Heart right ventricle (tissue), 16 donors: ENCODE measurements at regions of chr15 and their contacts with region 1.

Region 1: GRCh38 chr15:47196057-47196456 is 521.2 kb upstream of the SEMA6D start:
- DNase-seq: peak; percentile 77 to 82
- ATAC-seq: peak; percentile 86 to 99 (median 95)
- H3K4me3 ChIP-seq: no peak overlapping the region
- H3K27ac ChIP-seq: no peak overlapping the region
- H3K4me1 ChIP-seq: peaks cover 0 to 4% (median 0%) of the 10 kb centered on the region in 9 donors
- H3K27me3 ChIP-seq: no peaks in the 10 kb centered on the region
- CTCF ChIP-seq: peak; percentile 66 to 91 (median 83)

Region 2: DNA sequence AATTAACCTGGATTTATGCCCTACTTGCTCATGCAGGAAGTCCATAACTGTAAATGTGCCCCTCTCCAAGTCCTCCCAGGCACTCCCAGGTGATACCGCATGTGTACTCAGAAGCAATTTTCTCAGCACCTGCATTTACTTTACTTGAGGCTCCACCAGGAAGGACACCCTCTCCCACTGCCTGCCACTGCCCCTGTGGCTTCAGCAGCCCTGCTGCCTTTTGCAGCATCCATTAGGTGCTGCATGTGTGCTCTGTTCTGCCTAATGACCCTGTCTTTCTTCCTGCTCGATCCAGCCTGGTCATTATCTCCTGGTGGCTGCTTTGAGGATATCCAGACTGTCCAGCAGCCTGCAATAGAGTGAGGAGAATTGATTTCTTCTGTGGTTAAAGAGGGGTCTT is 413.6 kb after region 1 on chr15:
- intact Hi-C with region 1: loop called in 3 of 10 experiments (anchors 5 to 10 kb)
- DNase-seq: no peak
- ATAC-seq: no peak
- H3K4me3 ChIP-seq: no peak overlapping the region
- H3K27ac ChIP-seq: no peak overlapping the region
- H3K4me1 ChIP-seq: peaks cover 0 to 15% (median 10%) of the 10 kb centered on the region in 9 donors
- H3K27me3 ChIP-seq: peaks cover 0 to 27% (median 16%) of the 10 kb centered on the region in 7 donors
- CTCF ChIP-seq: no peak

Region 3: DNA sequence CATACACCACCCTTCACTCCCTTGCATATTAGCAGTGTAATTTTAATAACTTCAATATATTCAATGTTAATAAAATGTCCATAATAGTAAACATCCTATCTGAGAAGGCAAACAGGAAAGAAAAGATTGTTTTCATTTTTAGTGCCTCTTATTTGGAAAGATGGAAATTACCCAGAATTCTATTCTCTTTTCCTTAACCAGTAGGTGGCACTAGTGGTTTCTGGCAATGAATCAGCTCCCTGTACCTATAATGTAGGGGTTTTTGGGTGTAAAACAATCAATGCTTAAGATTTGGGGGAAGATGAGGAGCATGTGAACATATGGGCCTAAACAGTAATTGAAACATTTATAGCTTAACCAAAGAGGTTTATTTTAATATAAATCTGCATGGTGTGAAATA is 515.6 kb after region 1 on chr15:
- intact Hi-C with region 1: loop called in 2 of 10 experiments (anchors 5 to 10 kb)
- DNase-seq: no peak
- ATAC-seq: no peak
- H3K4me3 ChIP-seq: no peak overlapping the region
- H3K27ac ChIP-seq: no peak overlapping the region
- H3K4me1 ChIP-seq: peaks cover 0 to 14% (median 9%) of the 10 kb centered on the region in 9 donors
- H3K27me3 ChIP-seq: peaks cover 0 to 25% (median 0%) of the 10 kb centered on the region in 7 donors
- CTCF ChIP-seq: peak; percentile 22 to 70 (median 54)

Region 4: GRCh38 chr15:47987908-47988532 is 792.0 kb after region 1 on chr15:
- intact Hi-C with region 1: loop called (anchors 1 to 5 kb)
- DNase-seq: peak in 1 of 2 donors; percentile 47
- ATAC-seq: peak; percentile 83 to 96 (median 89)
- H3K4me3 ChIP-seq: no peak overlapping the region
- H3K27ac ChIP-seq: no peak overlapping the region
- H3K4me1 ChIP-seq: no peaks in the 10 kb centered on the region
- H3K27me3 ChIP-seq: no peaks in the 10 kb centered on the region
- CTCF ChIP-seq: peak; percentile 59 to 86 (median 74)

Region 5: GRCh38 chr15:48250640-48251076 is 1054.6 kb after region 1 on chr15:
- intact Hi-C with region 1: loop called in 1 of 10 experiments (anchors 10 kb)
- DNase-seq: peak in 1 of 2 donors; percentile 36
- ATAC-seq: no peak
- H3K4me3 ChIP-seq: no peak overlapping the region
- H3K27ac ChIP-seq: no peak overlapping the region
- H3K4me1 ChIP-seq: no peaks in the 10 kb centered on the region
- H3K27me3 ChIP-seq: peaks cover 0 to 25% (median 4%) of the 10 kb centered on the region in 7 donors
- CTCF ChIP-seq: peak; percentile 8 to 62 (median 50)